Activated naive CD4-positive, alpha-beta T cell treated with anti-CD3 and anti-CD28 coated beads for 36 hours (primary cell): ENCODE measurements at regions of chr17 and their contacts with region 1.

Region 1: DNA sequence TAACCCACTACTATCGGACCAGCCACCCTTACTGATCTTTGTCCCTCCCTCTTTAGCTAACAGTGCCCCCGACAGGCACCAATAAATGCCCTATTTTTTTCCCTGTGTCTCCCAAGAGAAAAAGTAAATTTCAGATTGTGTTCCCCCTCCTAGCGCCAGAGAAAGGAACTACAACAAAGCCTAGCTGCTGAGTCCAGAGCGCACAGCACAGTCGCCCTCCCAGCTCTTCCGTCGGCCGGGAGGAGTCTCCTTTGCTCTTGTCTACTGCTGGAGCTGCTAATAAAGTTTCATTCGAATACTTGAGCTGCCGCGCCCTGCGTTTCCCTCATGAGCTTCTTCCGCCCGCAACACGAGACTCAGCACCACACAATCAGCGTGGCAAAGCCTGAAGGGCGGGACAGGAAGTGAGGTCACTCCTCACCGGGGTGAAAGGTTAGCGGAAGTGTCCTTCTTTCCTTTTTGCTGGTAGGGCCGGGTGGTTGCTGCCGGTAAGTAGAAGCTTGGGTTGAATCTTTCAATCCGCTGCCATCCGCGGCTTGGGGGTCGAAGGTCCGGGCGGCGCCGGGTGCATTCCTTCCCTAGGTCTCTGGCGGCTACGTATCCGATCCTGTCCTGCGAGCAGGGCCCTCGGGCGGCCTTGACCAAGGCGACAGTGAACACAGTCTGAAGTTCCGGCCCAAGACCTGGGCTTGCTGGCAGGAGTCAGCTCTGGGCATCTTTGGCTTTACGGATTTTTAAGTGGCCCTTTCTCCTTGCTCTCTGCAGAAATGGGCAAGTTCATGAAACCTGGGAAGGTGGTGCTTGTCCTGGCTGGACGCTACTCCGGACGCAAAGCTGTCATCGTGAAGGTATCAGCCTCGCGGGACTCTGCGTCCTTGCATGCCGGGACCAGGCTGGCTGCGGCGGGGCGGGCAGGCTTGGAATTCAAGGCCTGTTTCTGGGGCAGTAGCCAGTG is at the start of gene RPL27:
- DNase-seq: peak; percentile 99
- H3K4me3 Mint-ChIP-seq: peak within 1 kb of the TSS; percentile 97
- H3K27ac Mint-ChIP-seq: peak within 1 kb of the TSS; percentile 97
- H3K4me1 Mint-ChIP-seq: peaks cover 34% of the 10 kb centered on the region
- H3K27me3 Mint-ChIP-seq: no peaks in the 10 kb centered on the region
- total RNA-seq, gene RPL27: 1,974 to 2,033 TPM

Region 2: DNA sequence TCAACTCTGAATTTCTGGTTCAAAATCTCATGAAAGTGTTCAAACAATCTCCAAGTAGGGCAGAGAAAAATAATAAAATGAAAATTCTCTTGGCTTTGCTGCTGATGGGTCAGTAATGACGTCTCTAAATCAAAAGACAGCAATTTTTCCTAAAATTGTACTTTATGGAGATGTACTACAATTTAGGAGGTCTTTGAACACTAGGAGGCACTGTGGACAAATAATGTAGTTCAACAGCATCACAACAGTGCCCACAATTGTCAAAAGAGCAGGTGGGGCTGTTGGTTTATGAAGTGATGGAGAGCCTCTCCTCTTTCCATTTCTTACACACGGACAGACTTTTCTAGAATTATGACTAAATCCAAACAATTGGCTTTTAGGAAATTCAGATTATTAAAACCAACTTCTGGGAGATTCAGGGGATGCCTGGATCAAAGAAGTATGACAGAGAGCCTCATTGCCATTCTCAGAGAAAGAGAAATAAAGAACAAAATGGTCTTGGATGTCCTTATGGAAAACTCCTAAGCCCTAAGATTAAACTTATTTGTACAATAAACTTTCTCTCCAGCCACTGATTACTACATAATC is 277.2 kb before region 1 on chr17:
- CTCF ChIA-PET with region 1: no interaction called
- intact Hi-C with region 1: loop called (anchors 1 kb)
- DNase-seq: peak; percentile 35
- H3K4me3 Mint-ChIP-seq: no peak overlapping the region
- H3K27ac Mint-ChIP-seq: no peak overlapping the region
- H3K4me1 Mint-ChIP-seq: no peaks in the 10 kb centered on the region
- H3K27me3 Mint-ChIP-seq: no peaks in the 10 kb centered on the region

Region 3: DNA sequence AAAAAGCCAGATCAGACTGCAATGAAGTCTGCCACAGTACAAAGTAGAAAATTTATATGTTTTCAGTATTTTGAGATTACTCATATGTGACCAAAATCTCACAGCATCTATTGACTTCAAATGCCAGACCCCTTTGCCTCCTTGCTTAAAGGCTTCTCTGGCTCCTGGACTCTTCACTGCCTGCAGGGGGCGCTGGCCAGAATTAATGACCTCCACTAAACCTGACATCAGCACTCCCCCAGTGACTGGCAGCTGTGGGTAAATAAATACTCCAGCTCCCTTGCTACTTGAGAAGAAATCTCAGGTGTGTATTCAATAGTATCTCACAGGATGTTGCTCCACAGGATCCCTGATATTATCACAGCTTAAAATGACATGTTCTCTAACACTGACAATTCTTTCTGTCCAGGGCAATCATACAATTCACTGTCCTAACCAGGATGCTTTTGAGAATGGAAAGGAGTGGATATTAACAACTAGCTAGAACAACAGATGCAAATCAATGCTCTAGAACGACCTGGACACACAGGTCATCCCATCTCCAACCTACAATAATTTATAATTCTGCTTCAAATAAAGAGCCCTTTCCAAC is 178.2 kb before region 1 on chr17:
- CTCF ChIA-PET with region 1: interaction called, 3 read pairs
- intact Hi-C with region 1: loop called (anchors 1 kb)
- DNase-seq: peak; percentile 82
- H3K4me3 Mint-ChIP-seq: no peak overlapping the region
- H3K27ac Mint-ChIP-seq: no peak overlapping the region
- H3K4me1 Mint-ChIP-seq: peaks cover 32% of the 10 kb centered on the region
- H3K27me3 Mint-ChIP-seq: no peaks in the 10 kb centered on the region

Region 4: GRCh38 chr17:42843358-42843934 is 154.8 kb before region 1 on chr17:
- CTCF ChIA-PET with region 1: interaction called, 3 read pairs
- intact Hi-C with region 1: loop called (anchors 1 kb)
- DNase-seq: peak; percentile 33
- H3K4me3 Mint-ChIP-seq: no peak overlapping the region
- H3K27ac Mint-ChIP-seq: no peak overlapping the region
- H3K4me1 Mint-ChIP-seq: peaks cover 13% of the 10 kb centered on the region
- H3K27me3 Mint-ChIP-seq: no peaks in the 10 kb centered on the region

Region 5: GRCh38 chr17:42980398-42981397 is 17.6 kb before region 1 on chr17 and contains the start of gene RUNDC1:
- CTCF ChIA-PET with region 1: interaction called, 5 read pairs
- intact Hi-C with region 1: loop called (anchors 1 kb)
- DNase-seq: peak; percentile 90
- H3K4me3 Mint-ChIP-seq: peak within 1 kb of the TSS; percentile 99
- H3K27ac Mint-ChIP-seq: peak within 1 kb of the TSS; percentile 90
- H3K4me1 Mint-ChIP-seq: peaks cover 36% of the 10 kb centered on the region
- H3K27me3 Mint-ChIP-seq: no peaks in the 10 kb centered on the region
- total RNA-seq, gene RUNDC1: 5.9 to 6.5 TPM

Region 6: DNA sequence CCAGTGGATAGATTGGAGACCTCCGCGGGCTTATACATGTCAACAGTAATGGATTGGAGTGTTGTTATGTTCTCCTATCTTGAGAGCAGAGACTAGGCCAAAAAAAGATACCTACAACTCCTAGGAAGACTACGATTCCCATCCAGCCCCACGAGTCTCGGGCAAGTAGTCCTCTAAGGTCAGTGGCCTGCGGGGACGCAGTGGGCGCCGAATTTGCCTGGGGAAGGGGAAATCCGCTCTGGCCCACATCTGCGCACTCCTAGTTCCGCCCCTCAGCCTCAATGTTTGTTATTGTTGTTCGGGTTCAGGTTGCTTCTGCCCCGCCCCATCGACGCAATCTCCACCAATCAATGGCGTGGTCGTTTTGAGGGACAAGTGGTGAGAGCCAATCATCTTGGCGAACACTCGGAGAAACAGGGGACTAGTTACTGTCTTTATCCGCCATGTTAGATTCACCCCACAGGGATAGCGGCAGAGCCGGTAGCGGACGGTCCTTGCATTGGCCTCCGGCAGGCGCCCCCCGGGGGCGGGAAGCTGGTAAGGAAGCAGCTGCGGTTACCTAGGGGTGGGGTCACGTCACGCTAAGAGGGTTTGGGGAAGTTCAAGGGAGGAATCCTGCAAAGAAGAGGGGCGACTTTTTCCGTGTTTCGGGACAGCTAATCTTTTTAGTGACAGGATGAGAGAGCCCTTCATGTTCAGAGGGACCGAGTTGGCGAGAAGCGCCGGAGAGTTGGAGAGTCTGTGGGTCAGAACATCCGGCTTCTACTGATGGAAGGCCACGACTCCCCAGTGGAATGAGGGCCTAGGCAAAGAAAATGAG is 172.7 kb after region 1 on chr17 and contains the start of gene NBR1:
- CTCF ChIA-PET with region 1: no interaction called
- intact Hi-C with region 1: loop called (anchors 1 kb)
- DNase-seq: peak; percentile 99
- H3K4me3 Mint-ChIP-seq: no peak within 1 kb of the TSS
- H3K27ac Mint-ChIP-seq: no peak within 1 kb of the TSS
- H3K4me1 Mint-ChIP-seq: peaks cover 36% of the 10 kb centered on the region
- H3K27me3 Mint-ChIP-seq: no peaks in the 10 kb centered on the region
- total RNA-seq, gene NBR1: 62.1 to 66.8 TPM

Region 7: DNA sequence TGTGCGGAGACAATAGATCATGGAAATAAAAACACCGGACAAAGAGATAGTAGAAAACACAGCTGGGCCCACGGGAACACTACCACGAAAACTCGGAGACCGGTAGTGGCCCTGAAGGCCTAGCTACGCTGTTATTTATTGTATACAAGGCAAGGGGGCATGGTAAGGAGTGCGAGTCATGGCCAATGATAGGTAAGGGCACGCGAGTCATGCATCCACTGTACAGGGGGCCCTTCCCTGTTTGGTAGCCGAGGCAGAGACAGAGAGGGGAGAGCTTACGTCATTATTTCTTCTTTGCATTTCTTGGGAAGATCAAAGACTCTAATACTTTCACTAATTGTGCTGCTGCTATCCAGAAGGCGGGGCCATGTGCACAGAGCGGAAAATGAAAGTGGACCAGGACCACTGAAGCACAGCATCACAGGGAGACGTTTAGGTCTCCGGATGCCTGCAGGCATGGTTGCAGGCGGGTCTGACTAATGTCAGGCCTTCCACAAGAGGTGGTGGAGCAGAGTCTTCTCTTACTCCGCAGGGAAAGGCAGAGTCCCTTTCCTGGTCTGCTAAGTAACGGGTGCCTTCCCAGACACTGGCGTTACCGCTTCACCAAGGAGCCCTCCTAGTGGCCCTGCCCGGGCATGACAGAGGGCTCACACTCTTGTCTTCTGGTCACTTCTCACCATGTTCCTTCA is 326.1 kb after region 1 on chr17:
- CTCF ChIA-PET with region 1: no interaction called
- intact Hi-C with region 1: no loop called
- DNase-seq: no peak
- H3K4me3 Mint-ChIP-seq: no peak overlapping the region
- H3K27ac Mint-ChIP-seq: no peak overlapping the region
- H3K4me1 Mint-ChIP-seq: peaks cover 10% of the 10 kb centered on the region
- H3K27me3 Mint-ChIP-seq: peaks cover 27% of the 10 kb centered on the region